ENCODE measurements at regions of chr11 and their contacts with region 1.

Region 1: GRCh38 chr11:45964911-45965389 is 42.5 kb downstream of the LARGE2 start:
- DNase-seq: peak; percentile 73
- ATAC-seq: peak; percentile 95
- H3K4me3 Mint-ChIP-seq: no peak overlapping the region
- H3K27ac Mint-ChIP-seq: no peak overlapping the region
- H3K4me1 Mint-ChIP-seq: no peaks in the 10 kb centered on the region
- H3K27me3 Mint-ChIP-seq: no peaks in the 10 kb centered on the region

Region 2: DNA sequence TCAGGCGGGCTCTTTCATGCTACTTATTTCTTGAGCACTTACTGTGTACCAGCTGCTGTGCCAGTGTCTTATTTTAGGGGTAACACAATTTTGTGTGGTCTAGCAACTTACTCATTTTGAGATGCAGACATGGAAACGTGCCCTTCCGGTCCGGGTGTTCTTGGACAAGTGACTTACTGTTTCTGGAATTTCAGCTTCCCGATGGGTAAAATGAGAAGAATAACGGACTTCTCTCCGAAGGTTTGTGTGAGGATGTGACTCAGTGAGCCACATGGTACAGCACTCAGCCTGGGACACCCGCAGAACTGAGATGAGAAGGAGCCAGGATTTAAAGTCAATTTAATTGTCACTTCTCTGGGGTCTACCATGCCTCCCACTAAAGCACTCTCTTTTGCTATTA is 564.4 kb before region 1 on chr11:
- CTCF ChIA-PET with region 1: no interaction called
- POLR2A ChIA-PET with region 1: no interaction called
- intact Hi-C with region 1: no loop called
- DNase-seq: no peak
- ATAC-seq: no peak
- H3K4me3 Mint-ChIP-seq: no peak overlapping the region
- H3K27ac Mint-ChIP-seq: no peak overlapping the region
- H3K4me1 Mint-ChIP-seq: no peaks in the 10 kb centered on the region
- H3K27me3 Mint-ChIP-seq: peaks cover 5% of the 10 kb centered on the region

Region 3: DNA sequence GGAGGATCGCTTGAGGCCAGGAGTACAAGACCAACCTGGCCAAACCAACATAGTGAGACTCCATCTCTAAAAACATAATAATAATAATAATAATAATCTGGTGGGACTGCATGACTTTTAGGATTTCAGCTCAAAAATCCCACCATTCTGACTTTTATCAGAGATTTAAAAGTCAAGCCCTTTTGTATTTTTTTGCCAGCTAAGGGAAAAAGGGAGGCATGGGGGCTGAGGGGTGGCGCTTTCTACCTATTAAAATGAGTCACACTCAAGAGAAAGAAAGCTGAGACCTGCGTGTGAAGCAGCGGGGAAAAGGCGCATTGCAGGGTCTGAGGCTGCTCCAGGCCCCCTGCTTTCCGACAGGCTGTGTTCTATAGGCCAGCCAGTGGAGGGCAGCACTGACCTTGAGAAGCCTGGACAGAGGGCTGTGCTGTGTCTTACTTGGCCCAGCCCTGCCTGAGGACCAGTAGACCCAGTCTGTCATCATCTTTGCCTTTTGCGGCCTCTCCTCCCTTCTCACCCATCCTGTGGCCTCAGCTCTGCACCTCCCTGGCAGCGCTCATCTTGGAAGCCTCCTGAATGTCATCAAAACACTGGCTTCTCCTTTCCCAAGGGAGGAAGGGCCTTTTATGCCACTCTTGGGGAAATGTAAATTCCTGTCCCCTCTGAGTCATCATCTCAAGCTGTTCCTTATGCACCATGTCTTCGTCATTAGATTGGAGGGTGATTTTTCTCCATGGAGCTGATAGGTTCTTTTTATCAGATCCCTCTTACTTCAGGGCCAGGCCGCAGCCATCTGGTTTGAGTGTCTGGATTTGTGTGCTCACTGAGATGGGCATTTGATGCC is 92.2 kb before region 1 on chr11:
- CTCF ChIA-PET with region 1: interaction called, 12 read pairs
- POLR2A ChIA-PET with region 1: no interaction called
- intact Hi-C with region 1: no loop called
- DNase-seq: peak; percentile 65
- ATAC-seq: peak; percentile 89
- H3K4me3 Mint-ChIP-seq: no peak overlapping the region
- H3K27ac Mint-ChIP-seq: no peak overlapping the region
- H3K4me1 Mint-ChIP-seq: no peaks in the 10 kb centered on the region
- H3K27me3 Mint-ChIP-seq: no peaks in the 10 kb centered on the region

Region 4: DNA sequence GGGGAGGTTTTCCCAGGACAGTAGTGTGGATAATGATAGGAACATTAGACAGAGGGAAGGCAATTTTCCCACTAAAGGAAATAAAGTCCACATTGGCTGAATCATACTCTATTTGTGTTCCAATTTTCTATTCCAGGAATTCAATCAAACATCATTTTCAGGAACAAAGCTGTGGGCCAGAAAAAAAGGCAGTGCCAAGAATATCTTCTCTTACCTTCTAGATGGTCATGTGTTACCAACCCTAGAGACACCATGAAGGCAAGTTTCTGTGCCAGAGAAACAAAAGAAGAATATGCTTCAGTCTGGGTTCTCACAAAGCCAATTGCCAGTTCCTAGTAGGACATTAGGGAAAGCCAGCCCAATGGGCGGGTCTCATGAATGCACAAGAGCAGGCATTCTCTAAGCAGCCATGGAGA is 14.9 kb before region 1 on chr11:
- CTCF ChIA-PET with region 1: interaction called, 24 read pairs
- POLR2A ChIA-PET with region 1: no interaction called
- intact Hi-C with region 1: no loop called
- DNase-seq: no peak
- ATAC-seq: no peak
- H3K4me3 Mint-ChIP-seq: no peak overlapping the region
- H3K27ac Mint-ChIP-seq: no peak overlapping the region
- H3K4me1 Mint-ChIP-seq: no peaks in the 10 kb centered on the region
- H3K27me3 Mint-ChIP-seq: no peaks in the 10 kb centered on the region

Region 5: GRCh38 chr11:45993531-45994001 is 28.6 kb after region 1 on chr11:
- CTCF ChIA-PET with region 1: interaction called, 63 read pairs
- POLR2A ChIA-PET with region 1: no interaction called
- intact Hi-C with region 1: no loop called
- DNase-seq: no peak
- ATAC-seq: no peak
- H3K4me3 Mint-ChIP-seq: no peak overlapping the region
- H3K27ac Mint-ChIP-seq: no peak overlapping the region
- H3K4me1 Mint-ChIP-seq: peaks cover 4% of the 10 kb centered on the region
- H3K27me3 Mint-ChIP-seq: no peaks in the 10 kb centered on the region

Region 6: GRCh38 chr11:46017341-46017740 is 52.4 kb after region 1 on chr11:
- CTCF ChIA-PET with region 1: interaction called, 19 read pairs
- POLR2A ChIA-PET with region 1: no interaction called
- intact Hi-C with region 1: no loop called
- DNase-seq: no peak
- ATAC-seq: no peak
- H3K4me3 Mint-ChIP-seq: no peak overlapping the region
- H3K27ac Mint-ChIP-seq: no peak overlapping the region
- H3K4me1 Mint-ChIP-seq: peaks cover 2% of the 10 kb centered on the region
- H3K27me3 Mint-ChIP-seq: no peaks in the 10 kb centered on the region

Region 7: DNA sequence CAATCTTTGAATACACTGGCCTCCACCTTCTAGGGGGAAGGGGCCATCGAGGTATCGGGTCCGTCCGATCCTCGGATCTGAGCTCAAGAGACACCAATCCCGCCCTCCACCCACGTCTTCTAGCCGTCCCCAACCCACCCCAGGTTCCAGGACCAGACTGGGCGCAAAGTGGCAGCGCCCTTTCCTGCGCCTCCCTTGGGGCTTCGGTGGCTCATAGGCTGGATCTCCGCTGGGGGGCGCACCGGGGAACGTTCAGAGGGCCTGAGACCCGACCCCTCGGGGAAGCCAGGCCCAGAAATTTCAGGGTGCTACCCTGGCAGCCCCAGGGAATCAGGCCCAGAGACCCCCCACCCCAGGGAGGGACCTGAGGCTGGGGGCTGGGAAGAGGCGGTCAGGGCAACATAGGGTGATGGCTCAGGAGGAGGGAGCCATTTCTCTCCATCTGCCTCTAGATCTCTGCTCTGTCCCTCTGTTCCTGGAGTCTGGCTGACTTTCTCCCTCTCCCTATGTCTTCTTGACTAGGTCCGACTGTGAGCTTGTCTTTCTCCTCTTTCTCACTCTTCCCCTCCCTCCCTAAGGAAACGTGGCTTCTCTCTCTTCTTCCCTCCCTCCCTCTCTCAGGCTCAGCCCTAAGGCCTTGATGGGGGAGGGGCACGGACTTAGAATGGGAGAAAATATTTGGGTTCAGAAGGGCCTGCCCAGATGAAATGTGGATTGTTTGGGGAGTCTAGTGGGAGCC is 313.6 kb after region 1 on chr11:
- CTCF ChIA-PET with region 1: no interaction called
- POLR2A ChIA-PET with region 1: no interaction called
- intact Hi-C with region 1: no loop called
- DNase-seq: peak; percentile 73
- ATAC-seq: peak; percentile 66
- H3K4me3 Mint-ChIP-seq: no peak overlapping the region
- H3K27ac Mint-ChIP-seq: no peak overlapping the region
- H3K4me1 Mint-ChIP-seq: peaks cover 3% of the 10 kb centered on the region
- H3K27me3 Mint-ChIP-seq: peaks cover 22% of the 10 kb centered on the region

Region 8: DNA sequence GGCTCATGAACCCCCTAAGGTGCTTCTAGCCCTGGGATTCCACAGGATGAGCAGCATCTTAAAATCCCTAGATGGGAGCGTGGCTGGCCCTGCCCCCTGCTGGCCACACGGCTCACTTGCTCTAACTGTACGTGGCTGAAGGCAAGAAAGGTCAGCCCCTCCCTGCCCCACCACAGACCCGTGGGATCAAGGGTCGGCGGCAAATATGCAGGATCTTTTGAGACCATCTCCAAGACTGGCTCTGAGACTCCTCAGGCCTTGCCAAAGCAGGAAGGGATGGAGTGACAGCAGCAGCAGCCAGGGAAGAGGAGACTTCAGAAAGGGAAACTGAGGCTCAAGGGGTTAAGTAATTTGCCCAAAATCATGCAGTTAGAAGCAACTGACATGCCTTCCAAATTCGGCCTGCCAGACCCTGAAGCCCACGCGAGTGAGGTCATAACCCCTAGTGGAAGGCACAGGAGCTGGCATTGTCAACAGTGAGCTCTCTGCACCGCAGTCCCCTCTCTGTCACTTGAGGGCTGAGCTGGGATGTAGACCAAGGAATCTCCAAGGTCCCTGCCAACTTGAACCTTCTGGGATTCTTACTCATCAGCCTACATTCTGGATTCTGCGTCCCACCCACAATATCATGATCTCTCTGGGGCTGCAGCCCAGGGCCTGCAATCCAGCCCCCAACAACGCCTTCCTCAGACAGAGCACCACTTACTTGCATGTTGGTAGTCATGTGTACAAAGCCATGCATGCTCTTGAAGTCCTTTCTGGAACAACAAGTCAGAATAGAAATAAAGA is 343.9 kb after region 1 on chr11:
- CTCF ChIA-PET with region 1: interaction called, 7 read pairs
- POLR2A ChIA-PET with region 1: no interaction called
- intact Hi-C with region 1: loop called (anchors 1 to 5 kb)
- DNase-seq: peak; percentile 85
- ATAC-seq: peak; percentile 86
- H3K4me3 Mint-ChIP-seq: no peak overlapping the region
- H3K27ac Mint-ChIP-seq: no peak overlapping the region
- H3K4me1 Mint-ChIP-seq: peaks cover 5% of the 10 kb centered on the region
- H3K27me3 Mint-ChIP-seq: no peaks in the 10 kb centered on the region